Activated CD8-positive, alpha-beta memory T cell treated with anti-CD3 and anti-CD28 coated beads, Interleukin-2, amount 10 ng/mL, durations not matched to agents 7 days and 5 days (primary cell): ENCODE measurements at regions of chr14 and their contacts with region 1.

Region 1: DNA sequence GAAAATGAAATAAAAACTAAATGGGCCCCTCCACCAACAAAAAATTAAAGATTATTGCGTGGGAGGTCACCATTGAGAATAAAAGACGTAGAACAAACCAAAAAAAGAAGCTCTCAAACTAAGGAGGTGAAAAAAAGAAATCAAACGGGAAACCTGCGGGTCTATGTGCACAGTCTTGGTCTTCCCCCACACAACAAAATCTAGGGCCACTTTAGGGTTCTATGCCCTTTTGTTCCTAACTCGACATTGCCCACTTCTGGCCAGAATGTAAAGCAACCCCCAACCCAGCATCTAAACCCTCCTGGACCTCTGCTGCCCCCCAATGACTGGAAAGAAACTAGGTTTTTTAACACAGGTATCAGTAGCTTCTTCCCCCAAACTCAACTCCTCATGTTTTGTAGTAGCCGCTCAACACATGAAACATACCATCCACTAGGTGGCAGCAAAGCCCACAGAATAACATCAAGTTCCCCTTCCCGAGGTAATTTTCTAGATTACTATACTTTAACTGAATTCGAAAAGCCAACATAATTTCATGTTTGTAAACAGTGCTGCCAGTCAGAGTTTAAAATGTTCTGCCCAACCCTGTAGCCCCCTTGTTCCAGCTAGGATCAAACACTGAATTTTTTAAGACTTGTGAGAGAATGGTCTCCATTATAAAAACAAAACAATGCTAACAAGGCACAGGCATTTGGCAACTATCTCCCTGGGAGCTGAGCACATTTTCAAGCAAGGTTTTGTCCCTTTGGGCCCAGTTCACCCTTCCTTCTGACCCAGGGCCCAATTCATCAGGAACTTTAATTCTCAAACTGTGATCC is 18.7 kb downstream of the DAD1 start:
- DNase-seq: peak; percentile 94
- ATAC-seq: peak; percentile 85
- H3K4me3 Mint-ChIP-seq: peak overlapping the region; percentile 81
- H3K27ac Mint-ChIP-seq: peak overlapping the region; percentile 95
- H3K4me1 Mint-ChIP-seq: peaks cover 67% of the 10 kb centered on the region
- H3K27me3 Mint-ChIP-seq: no peaks in the 10 kb centered on the region

Region 2: DNA sequence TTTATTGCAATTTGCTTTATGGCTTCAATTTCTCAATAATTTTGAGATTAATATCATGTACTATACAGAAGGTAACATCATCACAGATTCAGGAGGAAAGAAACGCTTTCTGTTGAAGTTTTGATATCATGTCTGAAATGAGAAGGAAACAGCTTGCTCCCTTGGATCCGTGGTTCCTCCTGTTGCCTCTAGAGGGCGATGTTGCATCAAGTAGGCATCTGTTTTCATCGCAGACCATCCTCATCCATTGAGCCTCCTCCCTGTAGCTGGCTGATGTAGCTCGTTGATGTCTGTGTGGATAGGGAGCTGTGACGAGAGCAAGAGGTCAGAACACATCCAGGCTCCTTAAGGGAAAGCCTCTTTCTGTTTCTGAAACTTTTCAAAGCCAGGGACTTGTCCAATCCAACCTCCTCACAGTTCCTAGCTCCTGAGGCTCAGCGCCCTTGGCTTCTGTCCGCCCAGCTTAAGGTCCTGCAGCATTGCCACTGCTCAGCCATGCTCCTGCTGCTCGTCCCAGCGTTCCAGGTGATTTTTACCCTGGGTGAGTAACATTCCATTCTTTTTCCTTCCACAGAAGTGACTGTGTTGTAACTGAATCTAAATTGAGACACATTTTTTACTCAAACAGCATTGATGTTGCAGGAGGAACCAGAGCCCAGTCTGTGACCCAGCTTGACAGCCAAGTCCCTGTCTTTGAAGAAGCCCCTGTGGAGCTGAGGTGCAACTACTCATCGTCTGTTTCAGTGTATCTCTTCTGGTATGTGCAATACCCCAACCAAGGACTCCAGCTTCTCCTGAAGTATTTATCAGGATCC is 592.0 kb before region 1 on chr14:
- CTCF ChIA-PET with region 1: interaction called, 19 read pairs
- DNase-seq: peak; percentile 77
- ATAC-seq: peak; percentile 81
- H3K4me3 Mint-ChIP-seq: peak overlapping the region; percentile 76
- H3K27ac Mint-ChIP-seq: peak overlapping the region; percentile 77
- H3K4me1 Mint-ChIP-seq: peaks cover 12% of the 10 kb centered on the region
- H3K27me3 Mint-ChIP-seq: peaks cover 6% of the 10 kb centered on the region

Region 3: GRCh38 chr14:22460461-22461195 is 109.7 kb before region 1 on chr14:
- CTCF ChIA-PET with region 1: no interaction called
- DNase-seq: no peak
- ATAC-seq: no peak
- H3K4me3 Mint-ChIP-seq: no peak overlapping the region
- H3K27ac Mint-ChIP-seq: no peak overlapping the region
- H3K4me1 Mint-ChIP-seq: no peaks in the 10 kb centered on the region
- H3K27me3 Mint-ChIP-seq: no peaks in the 10 kb centered on the region

Region 4: GRCh38 chr14:22519877-22520685 is 50.3 kb before region 1 on chr14:
- CTCF ChIA-PET with region 1: interaction called, 15 read pairs
- DNase-seq: no peak
- ATAC-seq: peak; percentile 20
- H3K4me3 Mint-ChIP-seq: peak overlapping the region; percentile 80
- H3K27ac Mint-ChIP-seq: peak overlapping the region; percentile 96
- H3K4me1 Mint-ChIP-seq: peaks cover 88% of the 10 kb centered on the region
- H3K27me3 Mint-ChIP-seq: no peaks in the 10 kb centered on the region

Region 5: GRCh38 chr14:22589096-22589839 is 18.9 kb after region 1 on chr14 and contains the start of gene DAD1:
- CTCF ChIA-PET with region 1: interaction called, 172 read pairs
- DNase-seq: peak; percentile 100
- ATAC-seq: peak; percentile 90
- H3K4me3 Mint-ChIP-seq: peak within 1 kb of the TSS; percentile 86
- H3K27ac Mint-ChIP-seq: peak within 1 kb of the TSS; percentile 100
- H3K4me1 Mint-ChIP-seq: peaks cover 56% of the 10 kb centered on the region
- H3K27me3 Mint-ChIP-seq: peaks cover 2% of the 10 kb centered on the region
- total RNA-seq, gene DAD1: 115 to 185 TPM

Region 6: DNA sequence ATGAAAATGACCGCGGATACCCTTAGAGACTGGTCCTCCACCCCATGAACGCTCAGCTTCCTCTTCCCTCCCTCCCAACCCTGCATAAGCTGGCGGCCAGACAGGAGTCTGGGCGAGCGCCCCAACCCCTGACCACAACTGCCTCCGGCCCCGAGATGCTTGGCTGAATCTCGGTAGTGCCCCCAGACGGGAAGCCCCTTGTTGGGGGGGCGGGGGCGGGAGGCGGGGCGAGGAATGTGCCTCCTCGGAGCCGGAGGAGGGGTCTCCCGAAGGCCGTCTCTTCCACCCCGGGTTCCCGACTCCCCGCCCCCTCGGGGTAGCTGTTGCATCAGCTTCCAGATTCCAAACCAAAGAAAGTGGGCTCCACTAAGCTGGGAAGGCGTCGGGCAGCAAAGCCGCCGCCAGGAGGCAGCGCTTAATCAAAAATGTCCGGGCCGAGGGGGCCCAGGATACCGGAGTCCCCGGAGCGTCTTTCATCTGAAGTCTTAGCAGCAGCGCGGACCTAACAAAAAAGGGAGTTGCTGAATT is 252.3 kb after region 1 on chr14:
- CTCF ChIA-PET with region 1: interaction called, 60 read pairs
- DNase-seq: peak; percentile 81
- ATAC-seq: peak; percentile 94
- H3K4me3 Mint-ChIP-seq: peak overlapping the region; percentile 30
- H3K27ac Mint-ChIP-seq: no peak overlapping the region
- H3K4me1 Mint-ChIP-seq: peaks cover 29% of the 10 kb centered on the region
- H3K27me3 Mint-ChIP-seq: peaks cover 28% of the 10 kb centered on the region

Region 7: GRCh38 chr14:22900081-22900799 is 329.9 kb after region 1 on chr14:
- CTCF ChIA-PET with region 1: interaction called, 19 read pairs
- DNase-seq: peak; percentile 71
- ATAC-seq: peak; percentile 87
- H3K4me3 Mint-ChIP-seq: no peak overlapping the region
- H3K27ac Mint-ChIP-seq: peak overlapping the region; percentile 61
- H3K4me1 Mint-ChIP-seq: peaks cover 18% of the 10 kb centered on the region
- H3K27me3 Mint-ChIP-seq: no peaks in the 10 kb centered on the region